CD4-positive, alpha-beta memory T cell (primary cell): ENCODE measurements at regions of chr2 and their contacts with region 1.

Region 1: DNA sequence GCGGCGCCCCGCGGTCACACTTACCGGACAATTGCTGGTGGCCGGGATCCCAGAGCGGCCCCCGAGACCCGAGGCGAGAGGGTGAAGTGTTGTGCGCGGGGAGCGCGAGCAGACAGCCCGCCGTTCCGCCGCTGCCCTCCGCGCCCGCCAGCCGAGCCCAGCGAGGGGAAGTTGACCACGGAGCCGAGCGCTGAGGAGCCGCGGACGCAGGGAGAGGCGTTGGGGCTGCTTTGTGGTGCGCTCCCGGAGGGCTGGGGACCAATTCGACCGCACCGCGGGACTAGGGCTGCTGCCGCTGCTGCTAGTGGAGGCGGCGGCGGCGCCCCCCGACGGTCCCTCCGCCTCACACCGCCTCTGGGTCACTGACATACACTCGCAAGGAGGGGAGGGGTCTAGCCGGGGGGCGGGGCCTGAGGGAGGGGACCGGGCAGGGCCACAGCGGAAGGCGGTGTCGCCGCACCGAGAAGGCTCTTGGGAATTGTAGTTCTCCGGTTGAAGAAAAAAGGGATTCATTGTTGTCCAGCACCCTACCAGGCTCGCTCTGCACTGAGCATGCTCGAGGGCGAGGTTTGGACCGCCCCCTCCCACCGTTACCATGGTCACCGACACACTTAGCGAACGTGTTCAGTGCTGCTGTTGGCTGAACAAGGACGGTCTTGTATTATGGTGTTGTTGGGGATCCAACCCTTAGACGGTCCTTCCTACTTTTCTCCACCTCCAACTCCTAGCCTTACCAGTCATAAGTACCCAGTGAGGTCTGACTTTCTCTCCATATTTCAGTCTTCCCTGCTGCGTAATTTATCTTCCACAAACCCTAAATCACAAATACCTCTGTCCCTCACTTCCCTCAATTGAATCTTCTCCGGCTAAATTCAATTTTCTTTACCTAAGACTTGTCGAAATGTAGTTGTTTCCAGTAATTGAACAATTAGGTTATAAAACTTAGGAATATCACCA is at the start of gene PELI1:
- DNase-seq: peak; percentile 86 to 94 (median 90)
- H3K4me3 ChIP-seq: peak within 1 kb of the TSS; percentile 61 to 81
- H3K4me3 Mint-ChIP-seq: peak within 1 kb of the TSS; percentile 92 to 99 (median 98)
- H3K27ac ChIP-seq: peak within 1 kb of the TSS; percentile 88
- H3K27ac Mint-ChIP-seq: peak within 1 kb of the TSS; percentile 96 to 99 (median 98)
- H3K4me1 ChIP-seq: peaks cover 53% of the 10 kb centered on the region
- H3K4me1 Mint-ChIP-seq: peaks cover 22 to 39% (median 25%) of the 10 kb centered on the region in 4 donors
- H3K27me3 ChIP-seq: no peaks in the 10 kb centered on the region
- H3K27me3 Mint-ChIP-seq: no peaks in the 10 kb centered on the region
- total RNA-seq, gene PELI1: 36.7 to 40.5 TPM

Region 2: DNA sequence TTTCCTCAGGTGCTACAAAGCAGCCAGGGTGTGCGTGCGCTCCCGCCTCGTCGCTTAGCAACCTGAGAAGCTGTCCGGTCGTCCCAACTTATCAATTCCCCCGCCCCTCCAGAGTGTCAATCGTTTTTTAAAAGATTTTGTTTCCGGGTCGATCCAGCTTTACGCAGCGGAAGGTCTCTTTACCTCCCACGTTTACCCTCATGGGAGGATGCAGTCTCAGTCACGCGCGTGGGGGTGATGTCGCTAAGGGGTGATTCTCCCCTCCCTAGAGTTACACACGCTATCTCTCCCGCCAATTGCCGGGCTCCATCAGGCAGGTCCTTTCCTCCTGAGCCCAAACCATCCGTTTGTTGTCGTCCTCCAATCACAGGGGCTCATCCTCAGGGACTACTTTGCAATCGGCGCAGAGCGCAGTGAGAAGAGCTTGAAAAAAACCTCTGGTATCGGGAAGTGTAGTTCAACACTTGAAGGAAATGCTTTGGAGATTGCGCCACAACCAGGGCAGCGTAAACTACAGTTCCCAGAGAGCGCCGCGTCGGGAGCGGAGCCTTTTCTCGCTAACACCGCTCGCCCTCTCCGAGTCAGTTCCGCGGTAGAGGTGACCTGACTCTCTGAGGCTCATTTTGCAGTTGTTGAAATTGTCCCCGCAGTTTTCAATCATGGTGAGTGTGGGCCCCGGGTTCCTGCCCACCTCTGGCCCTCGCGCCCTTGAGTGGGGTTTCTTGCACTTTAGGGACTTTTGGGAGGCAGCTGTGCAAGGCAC is 555.8 kb before region 1 on chr2 and contains the starts of genes MDH1 and WDPCP:
- CTCF ChIA-PET with region 1: no interaction called
- POLR2A ChIA-PET with region 1: no interaction called
- intact Hi-C with region 1: loop called (anchors 1 kb)
- DNase-seq: peak; percentile 93 to 99 (median 97)
- H3K4me3 ChIP-seq: peak within 1 kb of the TSS; percentile 78 to 96
- H3K4me3 Mint-ChIP-seq: peak within 1 kb of the TSS; percentile 89 to 96 (median 95)
- H3K27ac ChIP-seq: peak within 1 kb of the TSS; percentile 82
- H3K27ac Mint-ChIP-seq: peak within 1 kb of the TSS; percentile 92 to 99 (median 98)
- H3K4me1 ChIP-seq: peaks cover 32% of the 10 kb centered on the region
- H3K4me1 Mint-ChIP-seq: peaks cover 20 to 54% (median 43%) of the 10 kb centered on the region in 4 donors
- H3K27me3 ChIP-seq: no peaks in the 10 kb centered on the region
- H3K27me3 Mint-ChIP-seq: no peaks in the 10 kb centered on the region
- total RNA-seq, gene MDH1: 93.8 to 102 TPM
- total RNA-seq, gene WDPCP: 10.5 to 13.2 TPM

Region 3: GRCh38 chr2:64052468-64053241 is 91.7 kb before region 1 on chr2:
- CTCF ChIA-PET with region 1: interaction called, 3 read pairs
- POLR2A ChIA-PET with region 1: interaction called, 4 read pairs
- intact Hi-C with region 1: loop called (anchors 1 kb)
- DNase-seq: peak in 2 of 5 donors; percentile 11 to 17
- H3K4me3 ChIP-seq: no peak overlapping the region
- H3K4me3 Mint-ChIP-seq: peak overlapping the region in 1 of 8 donors; percentile 30
- H3K27ac ChIP-seq: no peak overlapping the region
- H3K27ac Mint-ChIP-seq: peak overlapping the region in 4 of 7 donors; percentile 16 to 34 (median 24)
- H3K4me1 ChIP-seq: peaks cover 28% of the 10 kb centered on the region
- H3K4me1 Mint-ChIP-seq: peaks cover 16 to 42% (median 29%) of the 10 kb centered on the region in 4 donors
- H3K27me3 ChIP-seq: no peaks in the 10 kb centered on the region
- H3K27me3 Mint-ChIP-seq: no peaks in the 10 kb centered on the region

Region 4: DNA sequence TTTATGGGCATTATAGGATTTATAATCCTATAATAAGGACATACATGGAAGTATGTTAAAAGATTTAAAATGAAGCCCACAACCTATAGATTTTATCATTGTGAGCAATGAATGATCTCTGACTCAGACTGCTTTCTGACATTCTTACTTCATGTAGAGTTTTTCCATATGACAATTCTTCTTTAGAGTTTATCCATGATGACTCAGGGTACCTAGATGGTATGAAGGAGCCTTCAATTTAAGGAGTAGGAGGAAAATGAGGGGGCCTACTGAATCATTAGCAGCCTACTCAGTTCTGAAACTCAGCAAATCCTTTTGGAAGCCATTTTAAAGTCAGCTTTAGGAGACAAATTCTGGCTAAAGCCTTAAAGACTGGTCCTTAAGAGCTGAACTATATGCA is 10.5 kb before region 1 on chr2:
- CTCF ChIA-PET with region 1: interaction called, 3 read pairs
- POLR2A ChIA-PET with region 1: interaction called, 5 read pairs
- intact Hi-C with region 1: loop called (anchors 1 kb)
- DNase-seq: no peak
- H3K4me3 ChIP-seq: no peak overlapping the region
- H3K4me3 Mint-ChIP-seq: no peak overlapping the region
- H3K27ac ChIP-seq: no peak overlapping the region
- H3K27ac Mint-ChIP-seq: peak overlapping the region in 2 of 7 donors; percentile 12 to 62
- H3K4me1 ChIP-seq: peaks cover 78% of the 10 kb centered on the region
- H3K4me1 Mint-ChIP-seq: peaks cover 52 to 79% (median 65%) of the 10 kb centered on the region in 4 donors
- H3K27me3 ChIP-seq: no peaks in the 10 kb centered on the region
- H3K27me3 Mint-ChIP-seq: no peaks in the 10 kb centered on the region

Region 5: GRCh38 chr2:64164629-64165028 is 20.3 kb after region 1 on chr2:
- CTCF ChIA-PET with region 1: no interaction called
- POLR2A ChIA-PET with region 1: no interaction called
- intact Hi-C with region 1: no loop called
- DNase-seq: no peak
- H3K4me3 ChIP-seq: no peak overlapping the region
- H3K4me3 Mint-ChIP-seq: no peak overlapping the region
- H3K27ac ChIP-seq: no peak overlapping the region
- H3K27ac Mint-ChIP-seq: no peak overlapping the region
- H3K4me1 ChIP-seq: no peaks in the 10 kb centered on the region
- H3K4me1 Mint-ChIP-seq: no peaks in the 10 kb centered on the region
- H3K27me3 ChIP-seq: no peaks in the 10 kb centered on the region
- H3K27me3 Mint-ChIP-seq: no peaks in the 10 kb centered on the region

Region 6: GRCh38 chr2:64228126-64228678 is 83.9 kb after region 1 on chr2:
- CTCF ChIA-PET with region 1: interaction called, 3 read pairs
- POLR2A ChIA-PET with region 1: interaction called, 8 read pairs
- intact Hi-C with region 1: loop called (anchors 2 kb)
- DNase-seq: peak; percentile 39 to 53 (median 46)
- H3K4me3 ChIP-seq: peak overlapping the region; percentile 30 to 50
- H3K4me3 Mint-ChIP-seq: peak overlapping the region; percentile 90 to 95 (median 93)
- H3K27ac ChIP-seq: peak overlapping the region; percentile 20
- H3K27ac Mint-ChIP-seq: peak overlapping the region; percentile 74 to 96 (median 93)
- H3K4me1 ChIP-seq: peaks cover 17% of the 10 kb centered on the region
- H3K4me1 Mint-ChIP-seq: peaks cover 9 to 27% (median 16%) of the 10 kb centered on the region in 4 donors
- H3K27me3 ChIP-seq: no peaks in the 10 kb centered on the region
- H3K27me3 Mint-ChIP-seq: peaks cover 0 to 4% of the 10 kb centered on the region in 2 donors

Region 7: DNA sequence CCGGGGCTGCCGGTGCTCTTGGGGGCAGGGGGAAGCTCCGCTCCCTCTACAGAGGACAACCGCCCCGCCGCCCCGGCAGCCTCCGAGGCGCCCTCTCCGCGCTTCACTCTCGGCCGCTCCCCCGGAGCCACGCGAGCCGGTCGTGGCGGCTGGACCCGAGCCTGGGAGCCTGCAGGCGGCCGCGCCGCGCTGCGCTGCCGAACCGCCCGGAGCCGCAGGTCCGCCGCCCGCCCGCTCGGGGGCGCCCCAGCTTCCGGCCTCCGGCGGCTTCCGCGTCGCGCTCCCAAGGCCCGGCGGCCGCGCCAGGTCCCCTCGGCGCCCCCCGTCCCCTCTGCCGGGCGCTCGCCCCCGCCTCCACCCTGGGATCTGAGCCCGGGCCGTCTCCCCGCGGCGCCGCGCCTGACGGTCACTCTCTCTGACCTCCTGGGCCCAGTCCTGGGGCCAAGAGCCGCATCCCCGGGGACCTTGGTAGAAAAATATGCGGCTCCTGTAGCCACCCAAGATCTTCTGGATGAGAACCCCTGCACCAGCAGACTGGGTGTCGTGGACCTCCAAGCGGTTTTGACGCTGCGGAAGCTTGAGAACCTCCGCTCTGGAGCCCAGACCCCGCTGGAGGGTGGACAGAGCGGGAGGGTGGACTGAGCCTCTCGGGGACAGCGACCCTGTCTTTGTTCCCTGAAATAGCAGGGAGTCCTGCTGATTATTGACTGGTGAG is 465.0 kb after region 1 on chr2:
- CTCF ChIA-PET with region 1: no interaction called
- POLR2A ChIA-PET with region 1: no interaction called
- intact Hi-C with region 1: loop called (anchors 10 kb)
- DNase-seq: peak; percentile 58 to 79 (median 76)
- H3K4me3 ChIP-seq: peak overlapping the region in 1 of 2 donors; percentile 61
- H3K4me3 Mint-ChIP-seq: peak overlapping the region; percentile 64 to 79 (median 75)
- H3K27ac ChIP-seq: peak overlapping the region; percentile 57
- H3K27ac Mint-ChIP-seq: peak overlapping the region; percentile 35 to 83 (median 70)
- H3K4me1 ChIP-seq: peaks cover 38% of the 10 kb centered on the region
- H3K4me1 Mint-ChIP-seq: peaks cover 10 to 33% (median 22%) of the 10 kb centered on the region in 4 donors
- H3K27me3 ChIP-seq: no peaks in the 10 kb centered on the region
- H3K27me3 Mint-ChIP-seq: no peaks in the 10 kb centered on the region